Body of pancreas (tissue), 4 donors: ENCODE measurements at regions of chr13 and their contacts with region 1.

Region 1: GRCh38 chr13:98842864-98843481 is 90.5 kb upstream of the SLC15A1 start:
- DNase-seq: peak; percentile 75 to 77 (median 76)
- ATAC-seq: peak; percentile 88
- H3K4me3 ChIP-seq: no peak overlapping the region
- H3K27ac ChIP-seq: no peak overlapping the region
- H3K4me1 ChIP-seq: peaks cover 11% of the 10 kb centered on the region
- H3K27me3 ChIP-seq: no peaks in the 10 kb centered on the region
- CTCF ChIP-seq: peak; percentile 81 to 91 (median 89)
- POLR2A ChIP-seq: no peak

Region 2: DNA sequence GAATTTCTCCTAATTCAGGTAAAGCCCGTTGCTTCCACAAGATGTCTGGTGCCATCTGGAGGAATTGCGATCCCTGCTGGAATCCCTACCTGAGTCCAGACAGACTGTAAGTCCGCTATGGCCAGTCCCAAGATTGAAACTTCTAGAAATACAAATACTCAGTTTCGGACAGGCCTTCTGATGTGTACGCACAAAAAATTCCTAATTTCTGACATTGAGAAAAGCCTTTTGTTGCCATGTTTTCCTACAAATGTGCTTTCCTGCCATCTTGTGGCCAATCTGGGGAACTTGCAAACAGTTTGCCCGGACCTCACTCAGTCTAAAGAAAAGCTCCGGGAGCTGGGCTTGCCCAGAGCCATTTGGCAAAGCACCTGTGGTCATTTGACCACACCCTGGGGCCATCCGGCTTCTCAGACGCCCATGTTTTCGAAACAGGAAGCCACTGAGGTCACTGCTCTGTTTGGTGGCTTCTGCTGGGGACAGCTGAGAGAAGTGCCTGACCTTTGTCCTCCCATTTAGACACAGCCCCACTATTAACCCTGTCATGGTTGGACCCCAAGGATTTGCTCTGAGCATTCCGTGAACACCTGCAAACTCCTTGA is 169.9 kb before region 1 on chr13:
- intact Hi-C with region 1: loop called (anchors 10 kb)
- DNase-seq: peak; percentile 73 to 80 (median 79)
- ATAC-seq: peak; percentile 94
- H3K4me3 ChIP-seq: no peak overlapping the region
- H3K27ac ChIP-seq: no peak overlapping the region
- H3K4me1 ChIP-seq: peaks cover 9% of the 10 kb centered on the region
- H3K27me3 ChIP-seq: no peaks in the 10 kb centered on the region
- CTCF ChIP-seq: peak; percentile 75 to 90 (median 86)
- POLR2A ChIP-seq: peak in 1 of 3 donors; percentile 18